ENCODE measurements at regions of chr12 and their contacts with region 1.

Region 1: DNA sequence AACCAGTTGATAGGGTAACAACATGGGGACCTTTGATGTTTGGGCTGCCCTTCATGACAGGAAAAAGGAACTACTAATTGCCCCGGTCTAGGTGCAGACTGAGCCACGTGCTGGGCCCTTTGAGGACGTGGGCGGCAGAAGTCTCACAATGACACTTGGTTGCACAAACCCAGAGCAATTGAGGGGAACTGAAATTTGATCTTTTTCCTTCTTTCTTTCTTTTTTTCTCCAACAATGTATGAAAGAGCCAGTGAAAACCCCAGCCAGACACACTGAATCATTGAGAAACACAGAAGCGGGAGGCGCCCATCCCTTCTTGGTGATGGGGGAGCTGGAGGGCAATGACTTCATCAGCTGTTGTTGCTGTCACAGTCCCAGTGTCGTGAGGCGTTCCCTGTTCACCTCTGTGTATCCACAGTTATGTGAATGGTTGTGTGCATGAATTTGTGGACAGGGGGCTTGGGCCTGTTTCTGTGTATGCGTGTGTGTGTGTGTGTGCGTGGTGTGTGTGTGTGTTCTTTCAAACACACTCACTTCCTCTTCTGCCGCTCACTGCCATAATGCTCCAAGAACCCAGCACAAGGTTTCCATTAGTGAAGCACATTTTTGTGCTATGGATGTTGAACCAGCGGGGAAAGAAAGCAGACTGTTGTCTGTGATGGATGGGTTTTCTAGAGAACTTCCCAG is 137.5 kb upstream of the CCND2 start:
- DNase-seq: no peak
- ATAC-seq: no peak
- H3K4me3 Mint-ChIP-seq: peak overlapping the region; percentile 55; the same call in 1 of the 2 replicates
- H3K27ac Mint-ChIP-seq: peak overlapping the region; percentile 97
- H3K4me1 Mint-ChIP-seq: peaks cover 74% of the 10 kb centered on the region
- H3K27me3 Mint-ChIP-seq: no peaks in the 10 kb centered on the region
- CTCF ChIP-seq: no peak

Region 2: GRCh38 chr12:3920351-3921150 is 215.5 kb before region 1 on chr12:
- CTCF ChIA-PET with region 1: no interaction called
- POLR2A ChIA-PET with region 1: no interaction called
- DNase-seq: no peak
- ATAC-seq: no peak
- H3K4me3 Mint-ChIP-seq: no peak overlapping the region
- H3K27ac Mint-ChIP-seq: no peak overlapping the region
- H3K4me1 Mint-ChIP-seq: no peaks in the 10 kb centered on the region
- H3K27me3 Mint-ChIP-seq: peaks cover 2% of the 10 kb centered on the region; the same call in 1 of the 2 replicates
- CTCF ChIP-seq: no peak

Region 3: GRCh38 chr12:3935078-3935477 is 201.0 kb before region 1 on chr12:
- CTCF ChIA-PET with region 1: no interaction called
- POLR2A ChIA-PET with region 1: no interaction called
- DNase-seq: no peak
- ATAC-seq: no peak
- H3K4me3 Mint-ChIP-seq: no peak overlapping the region
- H3K27ac Mint-ChIP-seq: no peak overlapping the region
- H3K4me1 Mint-ChIP-seq: peaks cover 11% of the 10 kb centered on the region
- H3K27me3 Mint-ChIP-seq: no peaks in the 10 kb centered on the region; the same call in 1 of the 2 replicates
- CTCF ChIP-seq: no peak

Region 4: DNA sequence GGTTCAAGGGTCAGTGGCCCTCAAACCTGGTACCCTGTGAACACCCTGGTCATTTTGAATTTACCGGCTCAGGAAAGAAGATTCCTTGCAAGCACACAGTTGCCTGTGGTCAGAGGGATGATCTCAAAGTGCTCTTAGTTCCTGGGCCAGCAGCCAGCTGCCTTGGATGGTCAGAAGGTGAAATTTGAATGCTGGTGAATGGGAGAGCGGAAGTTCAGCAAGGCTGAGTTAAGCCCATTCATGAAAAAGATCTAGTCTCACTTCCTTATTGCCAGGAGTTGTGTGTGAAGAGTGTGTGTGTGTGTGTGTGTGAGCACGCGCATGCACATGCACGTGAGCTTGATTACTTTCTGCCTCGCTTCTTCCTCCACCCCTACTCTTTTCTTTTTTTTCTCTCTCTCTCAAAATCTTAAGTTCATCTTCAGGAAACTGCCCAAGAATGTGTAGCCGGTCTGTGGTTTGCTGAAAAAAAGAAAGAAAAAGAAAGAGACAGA is 18.0 kb before region 1 on chr12:
- CTCF ChIA-PET with region 1: interaction called, 23 read pairs
- POLR2A ChIA-PET with region 1: interaction called, 21 read pairs
- DNase-seq: no peak
- ATAC-seq: no peak
- H3K4me3 Mint-ChIP-seq: no peak overlapping the region
- H3K27ac Mint-ChIP-seq: no peak overlapping the region
- H3K4me1 Mint-ChIP-seq: peaks cover 33% of the 10 kb centered on the region
- H3K27me3 Mint-ChIP-seq: no peaks in the 10 kb centered on the region
- CTCF ChIP-seq: no peak

Measured in WTC11 (cell line).